HEK293 (cell line): ENCODE measurements at regions of chr22 and their contacts with region 1.

Region 1: GRCh38 chr22:45096256-45096907 is 67.3 kb upstream of the NUP50 start:
- H3K4me3 ChIP-seq: no peak overlapping the region
- H3K27ac ChIP-seq: no peak overlapping the region
- H3K4me1 ChIP-seq: no peaks in the 10 kb centered on the region
- CTCF ChIP-seq: peak; percentile 47; the same call in 1 of the 2 replicates

Region 2: DNA sequence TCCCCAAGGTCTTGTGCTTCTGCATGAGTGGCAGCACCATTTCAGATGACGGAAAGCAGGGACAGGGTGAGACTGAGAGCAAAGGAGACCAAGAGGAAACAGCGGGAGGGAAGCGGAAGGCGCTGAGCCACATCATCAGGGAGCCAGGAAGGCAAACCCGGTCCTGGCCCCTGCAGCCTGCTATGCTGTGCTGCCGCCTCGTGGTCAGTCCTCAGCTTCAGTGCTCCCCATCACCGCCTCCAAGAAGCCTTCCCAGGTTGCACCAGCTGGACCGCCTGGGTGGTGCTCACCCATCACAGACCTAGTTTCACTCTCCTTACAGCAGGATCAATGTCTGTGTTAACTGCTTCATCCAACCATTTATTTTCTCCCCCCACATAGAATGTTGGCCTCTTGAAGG is 13.6 kb before region 1 on chr22:
- CTCF ChIA-PET with region 1: interaction called, 10 read pairs
- POLR2A ChIA-PET with region 1: interaction called, 3 read pairs
- H3K4me3 ChIP-seq: no peak overlapping the region
- H3K27ac ChIP-seq: no peak overlapping the region
- H3K4me1 ChIP-seq: no peaks in the 10 kb centered on the region
- CTCF ChIP-seq: no peak

Region 3: DNA sequence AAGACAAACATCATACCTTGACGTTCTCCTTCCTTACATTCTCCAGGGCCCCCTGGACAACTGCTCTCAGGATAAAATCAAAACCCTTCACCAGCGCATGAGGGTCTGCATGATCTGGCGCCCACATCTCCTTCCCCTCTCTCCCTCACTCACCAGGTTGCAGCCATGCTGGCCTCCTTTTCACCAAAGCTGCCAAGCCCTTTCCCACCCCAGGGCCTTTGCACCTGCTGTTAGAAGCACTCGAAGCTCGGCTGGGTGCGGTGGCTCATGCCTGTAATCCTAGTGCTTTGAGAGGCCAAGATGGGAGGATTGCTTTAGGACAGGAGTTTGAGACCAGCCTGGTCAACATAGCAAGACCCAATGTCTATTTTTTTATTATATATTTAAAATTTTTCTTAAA is 11.3 kb after region 1 on chr22:
- CTCF ChIA-PET with region 1: interaction called, 13 read pairs
- POLR2A ChIA-PET with region 1: no interaction called
- H3K4me3 ChIP-seq: no peak overlapping the region
- H3K27ac ChIP-seq: no peak overlapping the region
- H3K4me1 ChIP-seq: no peaks in the 10 kb centered on the region
- CTCF ChIP-seq: no peak